ENCODE measurements at regions of chr12 and their contacts with region 1.

Region 1: GRCh38 chr12:114579389-114579788 is 104.6 kb downstream of the TBX3 start:
- DNase-seq: no peak

Region 2: DNA sequence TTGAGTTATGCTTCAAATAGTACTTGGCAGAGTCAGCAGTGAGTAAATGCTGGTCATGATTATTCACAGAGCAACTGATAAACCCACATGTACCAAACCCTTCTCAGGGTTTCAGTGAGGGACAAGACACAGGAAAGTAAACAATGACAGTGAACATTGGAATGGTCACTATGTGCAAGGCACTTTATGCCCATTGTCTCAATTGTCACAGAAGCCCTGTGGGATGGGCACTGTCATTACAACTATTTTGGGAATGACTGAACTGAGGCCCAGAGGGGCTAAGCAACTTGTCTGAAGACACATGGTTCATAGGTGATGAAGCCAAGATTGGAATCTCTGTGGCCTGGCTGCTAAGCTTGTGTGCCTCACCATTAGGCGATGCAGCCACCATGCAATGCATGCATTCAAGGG is 851.7 kb before region 1 on chr12:
- intact Hi-C with region 1: loop called in 1 of 2 experiments (anchors 5 kb)
- DNase-seq: no peak